Activated CD4-positive, alpha-beta memory T cell treated with anti-CD3 and anti-CD28 coated beads, Interleukin-2, amount 10 ng/mL, durations not matched to agents 7 days and 5 days (primary cell): ENCODE measurements at regions of chr1 and their contacts with region 1.

Region 1: DNA sequence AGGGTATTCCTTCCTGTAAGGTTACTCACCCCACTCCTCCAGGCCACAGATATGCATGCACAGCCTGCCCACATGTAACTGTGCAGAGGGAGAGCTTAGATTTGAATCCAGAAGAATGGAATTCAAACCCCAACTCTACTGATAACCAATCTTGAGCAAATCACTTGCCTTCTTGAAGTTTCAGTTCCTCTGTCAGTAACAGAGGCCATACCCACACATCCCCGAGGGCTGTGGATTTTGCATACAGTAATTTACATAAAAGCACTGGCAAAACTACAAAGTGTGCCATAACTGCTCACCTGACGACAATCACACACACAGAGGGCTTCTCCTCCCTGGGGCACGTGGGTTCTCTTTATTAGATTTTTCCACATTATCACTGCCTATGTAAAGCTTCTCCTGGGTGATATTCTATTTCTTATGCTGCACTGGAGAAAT is 18.6 kb downstream of the CD247 start:
- DNase-seq: peak; percentile 41
- H3K4me3 Mint-ChIP-seq: peak overlapping the region; percentile 5
- H3K27ac Mint-ChIP-seq: peak overlapping the region; percentile 86
- H3K4me1 Mint-ChIP-seq: peaks cover 96% of the 10 kb centered on the region
- H3K27me3 Mint-ChIP-seq: no peaks in the 10 kb centered on the region

Region 2: DNA sequence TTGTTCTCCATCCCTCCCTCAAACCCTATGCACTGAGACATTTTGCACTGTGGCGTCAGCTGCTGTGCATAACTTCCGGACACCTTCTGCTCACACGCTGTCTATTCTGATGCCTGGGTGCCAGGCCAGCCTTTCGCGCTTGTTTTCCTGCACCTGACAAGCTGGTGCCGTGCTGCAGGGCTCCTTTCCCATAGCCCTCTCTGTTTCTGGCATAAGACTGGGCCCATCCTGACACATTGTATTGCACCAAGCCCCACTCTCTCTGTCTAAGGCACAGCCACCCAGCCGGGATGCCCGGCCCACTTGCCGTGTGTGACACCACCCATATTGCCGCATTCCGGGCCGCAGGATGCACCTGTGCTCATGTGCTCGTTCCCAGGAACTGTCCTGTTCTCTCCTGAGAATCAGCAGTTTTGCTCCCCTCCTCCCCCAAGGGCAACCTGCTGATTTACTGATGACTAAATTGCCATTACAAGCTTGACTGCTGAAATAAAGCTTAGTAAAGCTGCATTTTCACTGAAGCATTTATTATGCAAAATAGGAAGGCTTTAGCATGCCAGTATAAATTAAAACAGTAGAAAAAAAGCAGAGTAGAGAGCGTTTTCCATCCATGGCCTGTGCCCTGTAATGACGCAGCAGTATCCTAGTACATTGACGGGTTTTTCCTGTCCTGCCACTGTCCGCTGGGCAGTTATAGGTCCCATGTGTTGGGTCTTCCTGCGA is 69.4 kb before region 1 on chr1:
- CTCF ChIA-PET with region 1: no interaction called
- POLR2A ChIA-PET with region 1: no interaction called
- DNase-seq: no peak
- H3K4me3 Mint-ChIP-seq: no peak overlapping the region
- H3K27ac Mint-ChIP-seq: peak overlapping the region; percentile 28
- H3K4me1 Mint-ChIP-seq: peaks cover 35% of the 10 kb centered on the region
- H3K27me3 Mint-ChIP-seq: no peaks in the 10 kb centered on the region

Region 3: DNA sequence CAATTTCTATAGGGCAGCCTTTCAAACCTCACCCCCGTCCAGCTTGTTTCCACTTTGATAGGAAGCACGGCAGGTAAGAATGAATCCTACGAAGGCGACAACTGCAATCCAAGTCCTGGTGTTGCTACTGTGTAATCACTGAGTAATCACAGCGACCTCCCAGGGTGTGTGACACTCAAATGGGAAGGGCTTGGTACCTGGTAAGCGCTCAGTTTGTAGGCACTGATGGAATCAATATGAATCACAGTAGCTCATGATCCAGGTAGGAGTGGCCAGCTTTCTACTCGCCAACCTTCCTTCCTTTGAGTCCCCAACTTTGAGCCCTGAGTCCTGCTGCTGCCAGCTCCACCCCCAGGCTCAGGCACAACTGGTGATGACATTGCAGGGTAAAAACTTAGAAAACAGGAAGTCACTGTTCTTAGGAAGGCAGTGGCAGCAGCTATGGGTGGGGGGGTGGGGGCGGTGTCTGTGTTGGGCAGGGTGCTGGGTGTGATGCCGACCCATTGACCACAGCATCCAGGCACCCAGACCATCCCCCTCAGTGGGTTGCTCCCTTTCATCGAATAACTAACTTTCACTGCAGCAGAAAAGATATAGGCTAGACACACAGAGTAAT is 52.1 kb before region 1 on chr1:
- CTCF ChIA-PET with region 1: interaction called, 9 read pairs
- POLR2A ChIA-PET with region 1: interaction called, 39 read pairs
- DNase-seq: peak; percentile 84
- H3K4me3 Mint-ChIP-seq: peak overlapping the region; percentile 28
- H3K27ac Mint-ChIP-seq: peak overlapping the region; percentile 97
- H3K4me1 Mint-ChIP-seq: peaks cover 85% of the 10 kb centered on the region
- H3K27me3 Mint-ChIP-seq: no peaks in the 10 kb centered on the region

Region 4: DNA sequence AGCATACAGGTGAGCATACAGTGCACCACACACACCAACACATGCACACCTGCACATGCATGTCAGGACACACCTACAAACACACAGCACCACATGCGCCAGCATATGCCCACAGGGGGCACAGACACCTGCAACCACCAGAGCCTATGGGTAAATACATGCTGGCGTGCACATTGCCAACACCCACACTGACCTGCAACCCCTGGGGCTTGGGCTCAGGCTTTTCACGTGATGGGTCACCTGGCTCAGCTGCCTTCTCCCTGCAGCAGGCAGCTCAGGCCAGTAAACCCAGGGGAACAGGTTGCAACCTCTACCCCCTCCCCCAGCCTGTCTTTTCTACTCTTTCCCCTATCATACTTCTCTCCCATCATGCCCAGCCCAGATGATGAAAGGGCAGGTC is 10.6 kb after region 1 on chr1:
- CTCF ChIA-PET with region 1: interaction called, 36 read pairs
- POLR2A ChIA-PET with region 1: interaction called, 149 read pairs
- DNase-seq: peak; percentile 15
- H3K4me3 Mint-ChIP-seq: peak overlapping the region; percentile 11
- H3K27ac Mint-ChIP-seq: peak overlapping the region; percentile 44
- H3K4me1 Mint-ChIP-seq: peaks cover 78% of the 10 kb centered on the region
- H3K27me3 Mint-ChIP-seq: no peaks in the 10 kb centered on the region